Caco-2 (cell line): ENCODE measurements at regions of chr12 and their contacts with region 1.

Region 1: GRCh38 chr12:54324617-54325441 is at the start of gene COPZ1:
- DNase-seq: peak; percentile 95 to 98
- H3K4me3 ChIP-seq: peak within 1 kb of the TSS; percentile 74
- H3K4me3 Mint-ChIP-seq: peak within 1 kb of the TSS; percentile 96
- H3K27ac Mint-ChIP-seq: peak within 1 kb of the TSS; percentile 98
- H3K4me1 ChIP-seq: peaks cover 17% of the 10 kb centered on the region
- H3K4me1 Mint-ChIP-seq: peaks cover 16% of the 10 kb centered on the region
- H3K27me3 ChIP-seq: no peaks in the 10 kb centered on the region
- H3K27me3 Mint-ChIP-seq: no peaks in the 10 kb centered on the region
- CTCF ChIP-seq: peak; percentile 61 to 72
- total RNA-seq, gene COPZ1: 129 and 133 TPM in 2 replicates

Region 2: GRCh38 chr12:54220092-54220557 is 104.7 kb before region 1 on chr12:
- CTCF ChIA-PET with region 1: interaction called, 7 read pairs
- POLR2A ChIA-PET with region 1: no interaction called
- intact Hi-C with region 1: loop called (anchors 1 kb)
- DNase-seq: peak; percentile 68 to 79
- H3K4me3 ChIP-seq: no peak overlapping the region
- H3K4me3 Mint-ChIP-seq: no peak overlapping the region
- H3K27ac Mint-ChIP-seq: no peak overlapping the region
- H3K4me1 ChIP-seq: peaks cover 4% of the 10 kb centered on the region; the same call in 1 of the 2 replicates
- H3K4me1 Mint-ChIP-seq: no peaks in the 10 kb centered on the region
- H3K27me3 ChIP-seq: no peaks in the 10 kb centered on the region
- H3K27me3 Mint-ChIP-seq: no peaks in the 10 kb centered on the region
- CTCF ChIP-seq: peak; percentile 86

Region 3: GRCh38 chr12:54259194-54260011 is 65.4 kb before region 1 on chr12:
- CTCF ChIA-PET with region 1: interaction called, 7 read pairs
- POLR2A ChIA-PET with region 1: interaction called, 12 read pairs
- intact Hi-C with region 1: no loop called
- DNase-seq: peak; percentile 80 to 84
- H3K4me3 ChIP-seq: peak overlapping the region; percentile 35
- H3K4me3 Mint-ChIP-seq: peak overlapping the region; percentile 63
- H3K27ac Mint-ChIP-seq: peak overlapping the region; percentile 86
- H3K4me1 ChIP-seq: peaks cover 22% of the 10 kb centered on the region
- H3K4me1 Mint-ChIP-seq: peaks cover 15% of the 10 kb centered on the region
- H3K27me3 ChIP-seq: no peaks in the 10 kb centered on the region
- H3K27me3 Mint-ChIP-seq: no peaks in the 10 kb centered on the region
- CTCF ChIP-seq: no peak

Region 4: GRCh38 chr12:54285150-54286041 is 39.4 kb before region 1 on chr12:
- CTCF ChIA-PET with region 1: interaction called, 40 read pairs
- POLR2A ChIA-PET with region 1: interaction called, 99 read pairs
- intact Hi-C with region 1: loop called (anchors 1 kb)
- DNase-seq: no peak
- H3K4me3 ChIP-seq: no peak overlapping the region
- H3K4me3 Mint-ChIP-seq: no peak overlapping the region
- H3K27ac Mint-ChIP-seq: peak overlapping the region; percentile 80
- H3K4me1 ChIP-seq: peaks cover 38% of the 10 kb centered on the region
- H3K4me1 Mint-ChIP-seq: peaks cover 19% of the 10 kb centered on the region
- H3K27me3 ChIP-seq: no peaks in the 10 kb centered on the region
- H3K27me3 Mint-ChIP-seq: no peaks in the 10 kb centered on the region
- CTCF ChIP-seq: no peak

Region 5: GRCh38 chr12:54300732-54301427 is 23.9 kb before region 1 on chr12 and contains the start of gene NFE2:
- CTCF ChIA-PET with region 1: interaction called, 56 read pairs
- POLR2A ChIA-PET with region 1: interaction called, 26 read pairs
- intact Hi-C with region 1: loop called (anchors 1 kb)
- DNase-seq: peak; percentile 91
- H3K4me3 ChIP-seq: peak within 1 kb of the TSS; percentile 59
- H3K4me3 Mint-ChIP-seq: peak within 1 kb of the TSS; percentile 79
- H3K27ac Mint-ChIP-seq: peak within 1 kb of the TSS; percentile 60
- H3K4me1 ChIP-seq: peaks cover 35% of the 10 kb centered on the region
- H3K4me1 Mint-ChIP-seq: peaks cover 42% of the 10 kb centered on the region
- H3K27me3 ChIP-seq: no peaks in the 10 kb centered on the region
- H3K27me3 Mint-ChIP-seq: no peaks in the 10 kb centered on the region
- CTCF ChIP-seq: no peak
- total RNA-seq, gene NFE2: 5.7 and 6.2 TPM in 2 replicates

Region 6: DNA sequence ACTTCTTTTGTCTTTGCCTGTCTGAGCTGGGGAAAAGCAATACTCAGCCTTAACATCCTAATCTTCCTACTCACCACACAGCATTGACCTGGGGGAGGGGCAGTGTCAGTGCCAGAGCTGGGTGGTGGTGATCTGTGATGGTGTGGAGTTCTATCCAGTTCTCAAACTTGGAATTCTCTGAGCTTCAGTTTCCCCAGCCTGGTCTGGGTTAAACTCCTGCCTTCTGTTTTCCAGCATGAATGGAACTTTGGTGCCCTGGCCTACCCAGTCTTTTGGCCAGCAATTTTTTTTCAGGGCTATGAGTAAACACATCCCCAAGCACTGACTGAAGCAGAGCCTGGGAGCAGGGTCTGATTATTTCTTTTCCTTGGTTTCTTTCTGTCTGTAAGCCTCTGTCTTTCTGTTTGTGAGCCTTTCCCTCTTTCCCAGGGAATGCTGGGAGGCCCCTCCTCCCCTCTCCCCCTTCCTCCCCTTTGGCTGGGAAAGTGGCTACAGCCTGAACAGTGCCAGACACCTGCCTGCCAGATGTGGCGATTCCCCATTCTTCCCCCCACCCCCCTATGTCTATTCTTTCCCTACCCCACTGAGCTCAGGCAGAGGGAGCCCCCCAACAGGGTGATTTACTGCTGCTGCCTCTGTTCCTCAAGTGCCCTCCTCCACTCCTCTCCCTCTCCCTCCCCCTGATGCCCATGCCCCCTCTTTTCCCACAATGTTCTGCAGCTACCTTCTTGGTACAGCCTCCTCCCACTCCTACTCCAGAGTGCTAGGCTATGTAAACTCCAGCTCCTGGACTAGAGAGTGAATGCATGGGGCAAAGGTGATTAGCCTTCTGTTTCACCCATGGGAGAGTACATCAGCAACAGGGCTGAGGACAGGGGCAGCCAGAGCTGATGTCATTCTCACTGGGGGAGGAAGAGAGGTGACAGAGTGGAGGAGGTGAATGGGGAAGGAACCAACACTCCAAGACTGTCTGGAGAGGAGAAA is 28.4 kb after region 1 on chr12:
- CTCF ChIA-PET with region 1: interaction called, 44 read pairs
- POLR2A ChIA-PET with region 1: no interaction called
- intact Hi-C with region 1: no loop called
- DNase-seq: no peak
- H3K4me3 ChIP-seq: no peak overlapping the region
- H3K4me3 Mint-ChIP-seq: no peak overlapping the region
- H3K27ac Mint-ChIP-seq: no peak overlapping the region
- H3K4me1 ChIP-seq: peaks cover 5% of the 10 kb centered on the region; the same call in 1 of the 2 replicates
- H3K4me1 Mint-ChIP-seq: peaks cover 7% of the 10 kb centered on the region
- H3K27me3 ChIP-seq: no peaks in the 10 kb centered on the region
- H3K27me3 Mint-ChIP-seq: no peaks in the 10 kb centered on the region
- CTCF ChIP-seq: no peak

Region 7: GRCh38 chr12:54368709-54369583 is 44.1 kb after region 1 on chr12:
- CTCF ChIA-PET with region 1: interaction called, 4 read pairs
- POLR2A ChIA-PET with region 1: interaction called, 11 read pairs
- intact Hi-C with region 1: no loop called
- DNase-seq: peak; percentile 86 to 87
- H3K4me3 ChIP-seq: no peak overlapping the region
- H3K4me3 Mint-ChIP-seq: peak overlapping the region; percentile 23
- H3K27ac Mint-ChIP-seq: no peak overlapping the region
- H3K4me1 ChIP-seq: peaks cover 6% of the 10 kb centered on the region; the same call in 1 of the 2 replicates
- H3K4me1 Mint-ChIP-seq: no peaks in the 10 kb centered on the region
- H3K27me3 ChIP-seq: no peaks in the 10 kb centered on the region
- H3K27me3 Mint-ChIP-seq: no peaks in the 10 kb centered on the region
- CTCF ChIP-seq: peak; percentile 75 to 86